PC-9 (cell line): ENCODE measurements at regions of chr1 and their contacts with region 1.

Region 1: DNA sequence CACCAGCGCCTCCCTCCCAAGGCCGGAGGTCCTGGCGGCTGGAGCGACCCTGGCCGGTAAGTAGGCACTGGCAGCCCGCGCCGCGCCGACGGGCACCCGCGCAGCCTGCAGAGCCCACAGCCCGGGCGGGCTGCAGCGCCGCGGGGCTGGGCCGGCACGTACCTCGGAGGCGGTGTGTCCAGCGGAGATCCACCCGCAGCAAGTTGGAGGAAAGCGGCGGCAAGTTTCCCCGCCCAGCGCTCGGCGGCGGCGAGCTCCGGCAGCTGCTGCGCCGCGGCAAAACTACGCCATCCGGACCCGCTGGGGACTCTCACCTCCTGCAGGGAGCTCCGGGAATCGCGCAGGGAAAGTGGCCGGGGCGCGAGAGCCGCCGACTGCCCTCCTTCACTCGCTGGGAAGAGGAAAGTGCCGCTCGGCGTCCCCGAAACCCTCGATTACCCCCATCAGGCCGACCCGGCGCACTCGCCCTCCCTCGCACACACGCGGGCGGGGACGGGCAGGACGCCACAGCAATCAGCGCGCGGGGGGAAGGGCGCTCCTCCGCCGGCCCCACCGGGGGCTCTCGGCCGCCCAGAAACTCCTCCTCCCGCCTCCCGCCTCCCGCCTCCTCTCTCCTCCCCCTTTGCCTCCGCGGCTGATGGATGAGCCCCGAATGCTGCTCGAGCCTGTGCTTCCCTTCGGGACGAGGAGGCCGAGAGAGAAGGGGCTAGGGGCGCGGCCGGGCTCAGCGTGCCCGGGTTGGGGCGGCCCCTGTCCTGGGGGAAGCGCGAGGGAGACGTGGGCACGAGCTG is at the start of gene TGFBR3:
- DNase-seq: peak; percentile 77 to 80
- H3K4me3 ChIP-seq: peak within 1 kb of the TSS; percentile 87
- H3K27ac ChIP-seq: peak within 1 kb of the TSS; percentile 30; the same call in 1 of the 2 replicates
- H3K4me1 ChIP-seq: peaks cover 42% of the 10 kb centered on the region
- H3K27me3 ChIP-seq: no peaks in the 10 kb centered on the region
- CTCF ChIP-seq: peak; percentile 60
- total RNA-seq, gene TGFBR3: 1.6 and 2.5 TPM in 2 replicates

Region 2: DNA sequence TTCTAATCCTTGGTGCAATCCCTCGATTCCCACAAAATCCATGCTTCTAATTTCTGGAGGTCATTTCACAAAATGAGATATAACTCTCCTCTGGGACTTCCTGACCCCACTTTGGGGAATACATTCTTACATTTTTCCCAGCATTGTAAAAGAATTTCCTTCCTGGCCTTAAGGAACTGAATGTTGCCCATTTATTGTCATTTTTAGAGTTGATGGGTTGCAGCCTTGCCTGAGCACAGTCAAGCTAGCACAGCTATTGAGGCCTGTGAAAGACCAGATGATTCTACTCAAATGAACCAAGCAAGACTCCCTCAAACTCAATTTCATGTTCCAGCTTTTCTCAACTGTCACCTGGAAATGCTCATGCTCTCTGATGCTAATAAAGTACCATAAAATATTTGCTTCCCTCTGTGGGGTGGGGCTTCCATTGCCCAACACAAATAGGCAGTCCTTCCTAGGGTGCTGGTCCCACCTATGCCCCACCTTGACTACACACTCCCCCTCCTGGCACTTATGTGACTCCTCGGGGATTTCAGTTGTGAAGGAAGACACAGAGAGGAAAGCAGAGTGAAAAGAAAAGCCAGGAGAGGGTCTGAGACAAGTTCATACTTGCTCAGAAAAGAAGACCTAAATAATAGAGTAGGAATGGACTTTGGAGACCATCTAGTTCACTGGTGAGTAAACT is 409.2 kb before region 1 on chr1:
- CTCF ChIA-PET with region 1: no interaction called
- POLR2A ChIA-PET with region 1: no interaction called
- intact Hi-C with region 1: no loop called
- DNase-seq: no peak
- H3K4me3 ChIP-seq: no peak overlapping the region
- H3K27ac ChIP-seq: no peak overlapping the region
- H3K4me1 ChIP-seq: 0 out of 2 replicates have a peak, but pooled peaks cover 5% of the 10 kb centered on the region
- H3K27me3 ChIP-seq: no peaks in the 10 kb centered on the region
- CTCF ChIP-seq: no peak

Region 3: DNA sequence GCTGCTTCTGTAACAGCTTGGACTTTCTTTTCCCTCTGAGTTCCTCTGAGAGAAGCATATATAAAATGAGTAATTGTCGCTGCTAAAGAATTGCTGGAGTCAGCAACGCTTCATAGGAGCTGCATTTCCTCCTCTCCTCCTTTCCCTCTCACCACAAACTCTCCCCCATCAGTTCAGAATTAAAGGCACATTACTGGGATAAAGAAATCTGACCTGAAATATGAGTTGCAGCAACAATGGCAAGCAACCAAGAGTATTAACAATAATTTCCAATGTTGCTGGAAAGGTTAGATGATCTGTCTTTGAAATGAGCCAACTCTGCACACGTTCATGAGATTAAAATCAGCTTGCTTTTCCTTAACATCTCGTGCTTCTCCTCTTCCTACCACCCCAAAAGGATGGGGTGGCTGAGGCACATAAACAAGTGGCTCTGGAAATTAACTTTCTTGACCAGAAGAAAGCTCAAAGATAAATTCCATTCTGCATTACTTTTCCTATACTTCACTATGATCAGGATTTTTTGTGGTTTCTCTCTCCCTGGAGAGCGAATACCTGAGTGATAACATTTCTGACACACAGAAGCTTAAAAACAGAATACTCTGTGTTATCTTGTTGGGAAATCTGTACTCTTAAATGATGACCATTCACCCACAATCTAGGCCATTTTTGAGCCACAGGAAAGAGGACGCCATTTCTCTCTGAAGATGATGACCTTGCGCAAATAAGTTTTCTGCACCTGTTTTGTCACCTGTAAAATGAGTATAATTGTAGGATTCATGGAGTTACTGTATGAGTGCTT is 90.1 kb before region 1 on chr1:
- CTCF ChIA-PET with region 1: no interaction called
- POLR2A ChIA-PET with region 1: no interaction called
- intact Hi-C with region 1: loop called (anchors 5 kb)
- DNase-seq: peak; percentile 43 to 98
- H3K4me3 ChIP-seq: peak overlapping the region; percentile 38
- H3K27ac ChIP-seq: peak overlapping the region; percentile 80
- H3K4me1 ChIP-seq: peaks cover 35% of the 10 kb centered on the region
- H3K27me3 ChIP-seq: no peaks in the 10 kb centered on the region
- CTCF ChIP-seq: no peak

Region 4: DNA sequence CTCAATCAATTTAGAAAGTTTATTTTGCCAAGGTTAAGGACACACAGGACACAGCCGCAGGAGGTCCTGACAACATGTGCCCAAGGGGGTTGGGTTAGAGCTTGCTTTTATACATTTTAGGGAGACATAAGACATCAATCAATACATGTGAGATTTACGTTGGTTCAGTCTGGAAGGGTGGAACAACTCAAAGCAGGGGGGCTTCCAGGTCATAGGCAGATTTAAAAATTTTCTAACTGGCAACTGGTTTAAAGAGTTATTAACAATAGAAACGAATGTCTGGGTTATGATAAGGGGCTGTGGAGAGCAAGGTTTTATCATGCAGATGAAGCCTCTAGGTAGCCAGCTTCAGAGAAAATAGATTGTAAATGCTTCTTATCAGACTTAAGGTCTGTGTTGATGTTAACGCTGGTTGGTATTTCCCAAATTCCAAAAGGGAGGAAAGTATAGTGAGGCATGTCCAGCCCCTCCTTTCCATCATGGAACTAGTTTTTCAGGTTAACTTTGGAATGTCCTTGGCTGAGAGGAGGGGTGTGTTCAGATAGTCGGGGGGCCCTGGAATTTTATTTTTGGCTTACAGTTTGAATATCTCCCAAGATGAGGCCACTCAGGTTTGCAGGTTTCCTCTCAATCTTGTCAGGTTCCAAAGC is 31.0 kb after region 1 on chr1:
- CTCF ChIA-PET with region 1: no interaction called
- POLR2A ChIA-PET with region 1: no interaction called
- intact Hi-C with region 1: loop called (anchors 1 kb)
- DNase-seq: peak in 1 of 2 experiments; percentile 48
- H3K4me3 ChIP-seq: no peak overlapping the region
- H3K27ac ChIP-seq: no peak overlapping the region
- H3K4me1 ChIP-seq: peaks cover 12% of the 10 kb centered on the region
- H3K27me3 ChIP-seq: no peaks in the 10 kb centered on the region
- CTCF ChIP-seq: no peak